Activated naive CD4-positive, alpha-beta T cell treated with anti-CD3 and anti-CD28 coated beads for 36 hours (primary cell): ENCODE measurements at regions of chrX and their contacts with region 1.

Region 1: GRCh38 chrX:101287402-101287801 is 3.7 kb downstream of the TAF7L start:
- DNase-seq: peak; percentile 6
- H3K4me3 Mint-ChIP-seq: no peak overlapping the region
- H3K27ac Mint-ChIP-seq: no peak overlapping the region
- H3K4me1 Mint-ChIP-seq: no peaks in the 10 kb centered on the region
- H3K27me3 Mint-ChIP-seq: peaks cover 1% of the 10 kb centered on the region

Region 2: GRCh38 chrX:100720301-100720700 is 567.1 kb before region 1 on chrX:
- CTCF ChIA-PET with region 1: no interaction called
- intact Hi-C with region 1: no loop called
- DNase-seq: no peak
- H3K4me3 Mint-ChIP-seq: no peak overlapping the region
- H3K27ac Mint-ChIP-seq: no peak overlapping the region
- H3K4me1 Mint-ChIP-seq: no peaks in the 10 kb centered on the region
- H3K27me3 Mint-ChIP-seq: no peaks in the 10 kb centered on the region

Region 3: GRCh38 chrX:100895365-100896075 is 391.9 kb before region 1 on chrX:
- CTCF ChIA-PET with region 1: no interaction called
- intact Hi-C with region 1: loop called (anchors 1 kb)
- DNase-seq: peak; percentile 54
- H3K4me3 Mint-ChIP-seq: no peak overlapping the region
- H3K27ac Mint-ChIP-seq: peak overlapping the region; percentile 71
- H3K4me1 Mint-ChIP-seq: no peaks in the 10 kb centered on the region
- H3K27me3 Mint-ChIP-seq: no peaks in the 10 kb centered on the region